HepG2 (cell line): ENCODE measurements at regions of chr1 and their contacts with region 1.

Region 1: DNA sequence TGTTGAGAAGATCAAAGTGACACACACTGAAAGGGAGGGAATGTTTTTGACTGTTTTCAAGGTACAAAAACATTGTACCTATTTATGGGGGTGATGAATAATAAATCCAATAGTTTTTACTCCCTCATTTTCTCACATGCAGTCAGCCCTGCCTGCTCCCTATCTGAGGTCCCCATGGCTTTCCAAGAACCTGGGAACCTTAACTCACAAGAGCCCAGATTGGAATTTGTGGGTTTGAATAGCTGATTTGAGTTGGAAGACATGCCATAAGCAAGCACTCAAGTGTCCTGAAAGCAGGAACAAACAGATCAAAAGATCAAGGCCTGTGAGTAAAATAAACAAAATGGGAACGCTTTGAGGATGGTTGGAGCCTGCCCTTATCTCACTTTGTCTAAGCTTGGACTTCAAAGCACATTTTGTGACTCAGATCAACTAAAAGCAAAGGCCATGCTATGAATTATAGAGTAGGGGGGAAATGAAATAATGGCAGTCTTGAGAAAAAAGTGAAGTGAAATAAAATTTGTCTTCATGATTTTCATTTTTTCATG is 136.6 kb downstream of the LYPLAL1 start:
- DNase-seq: peak; percentile 99
- ATAC-seq: peak; percentile 94
- H3K4me3 ChIP-seq: no peak overlapping the region; a peak in 1 of 6 replicates
- H3K27ac ChIP-seq: peak overlapping the region; percentile 90
- H3K4me1 ChIP-seq: peaks cover 52% of the 10 kb centered on the region
- H3K27me3 ChIP-seq: no peaks in the 10 kb centered on the region
- CTCF ChIP-seq: no peak
- EP300 ChIP-seq: peak; percentile 95 to 100
- POLR2A ChIP-seq: no peak
- RAD21 ChIP-seq: no peak; the same call in 1 of the 2 replicates

Region 2: GRCh38 chr1:219173758-219174588 is 136.3 kb before region 1 on chr1 and contains the start of gene LYPLAL1:
- CTCF ChIA-PET with region 1: no interaction called
- POLR2A ChIA-PET with region 1: interaction called, 29 read pairs
- in situ Hi-C with region 1: loop called (anchors 10 kb)
- intact Hi-C with region 1: loop called (anchors 10 kb)
- DNase-seq: peak; percentile 74
- ATAC-seq: peak; percentile 95
- H3K4me3 ChIP-seq: peak within 1 kb of the TSS; percentile 79 to 88 (median 84)
- H3K27ac ChIP-seq: peak within 1 kb of the TSS; percentile 81
- H3K4me1 ChIP-seq: peaks cover 71% of the 10 kb centered on the region
- H3K27me3 ChIP-seq: no peaks in the 10 kb centered on the region; a peak in 1 of 5 replicates
- CTCF ChIP-seq: peak; percentile 39
- EP300 ChIP-seq: no peak
- POLR2A ChIP-seq: peak; percentile 91 to 97
- RAD21 ChIP-seq: no peak
- total RNA-seq, gene LYPLAL1: 29.1 and 31.6 TPM in 2 replicates

Region 3: DNA sequence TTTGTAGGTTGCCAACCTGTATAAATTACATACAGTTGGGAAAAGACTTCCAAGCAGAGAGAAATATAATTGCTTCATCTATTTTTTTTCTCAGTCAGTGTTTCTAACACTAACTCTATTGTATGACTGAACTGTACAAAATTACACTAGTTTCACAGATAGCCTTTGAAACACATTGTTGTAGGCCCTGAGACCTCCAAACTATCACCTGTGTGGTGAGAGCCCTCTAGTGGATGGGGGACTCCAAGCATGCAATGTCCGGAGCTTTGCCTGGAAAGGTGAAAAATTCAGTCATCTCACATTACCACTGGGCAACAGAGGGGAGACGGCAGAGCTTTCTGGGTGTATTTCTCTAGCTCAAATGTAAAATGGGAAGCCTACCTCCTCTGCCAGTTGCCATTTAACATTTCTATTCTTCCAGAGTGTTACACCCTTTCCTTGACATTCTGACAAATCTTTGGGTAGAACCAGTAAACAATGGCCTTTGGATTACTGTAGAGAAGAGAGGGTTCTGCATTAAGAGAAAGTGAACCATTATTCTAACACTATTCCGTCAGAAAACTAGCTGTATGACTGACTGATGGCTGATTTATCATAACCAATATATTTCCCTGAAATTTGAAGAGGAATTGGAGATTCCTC is 75.7 kb after region 1 on chr1:
- CTCF ChIA-PET with region 1: no interaction called
- POLR2A ChIA-PET with region 1: interaction called, 19 read pairs
- in situ Hi-C with region 1: no loop called
- intact Hi-C with region 1: loop called (anchors 2 kb)
- DNase-seq: peak; percentile 69
- ATAC-seq: peak; percentile 98
- H3K4me3 ChIP-seq: no peak overlapping the region
- H3K27ac ChIP-seq: no peak overlapping the region
- H3K4me1 ChIP-seq: peaks cover 32% of the 10 kb centered on the region
- H3K27me3 ChIP-seq: no peaks in the 10 kb centered on the region
- CTCF ChIP-seq: peak; percentile 89
- EP300 ChIP-seq: no peak
- POLR2A ChIP-seq: no peak
- RAD21 ChIP-seq: peak; percentile 88